BJ (cell line): ENCODE measurements at regions of chr20 and their contacts with region 1.

Region 1: GRCh38 chr20:38472513-38473372 is at the start of gene RALGAPB:
- DNase-seq: peak; percentile 89
- H3K4me3 ChIP-seq: peak within 1 kb of the TSS; percentile 71
- H3K27me3 ChIP-seq: no peaks in the 10 kb centered on the region
- CTCF ChIP-seq: peak; percentile 65
- polyA plus RNA-seq, gene RALGAPB: 14.8 and 24.3 TPM in 2 replicates

Region 2: DNA sequence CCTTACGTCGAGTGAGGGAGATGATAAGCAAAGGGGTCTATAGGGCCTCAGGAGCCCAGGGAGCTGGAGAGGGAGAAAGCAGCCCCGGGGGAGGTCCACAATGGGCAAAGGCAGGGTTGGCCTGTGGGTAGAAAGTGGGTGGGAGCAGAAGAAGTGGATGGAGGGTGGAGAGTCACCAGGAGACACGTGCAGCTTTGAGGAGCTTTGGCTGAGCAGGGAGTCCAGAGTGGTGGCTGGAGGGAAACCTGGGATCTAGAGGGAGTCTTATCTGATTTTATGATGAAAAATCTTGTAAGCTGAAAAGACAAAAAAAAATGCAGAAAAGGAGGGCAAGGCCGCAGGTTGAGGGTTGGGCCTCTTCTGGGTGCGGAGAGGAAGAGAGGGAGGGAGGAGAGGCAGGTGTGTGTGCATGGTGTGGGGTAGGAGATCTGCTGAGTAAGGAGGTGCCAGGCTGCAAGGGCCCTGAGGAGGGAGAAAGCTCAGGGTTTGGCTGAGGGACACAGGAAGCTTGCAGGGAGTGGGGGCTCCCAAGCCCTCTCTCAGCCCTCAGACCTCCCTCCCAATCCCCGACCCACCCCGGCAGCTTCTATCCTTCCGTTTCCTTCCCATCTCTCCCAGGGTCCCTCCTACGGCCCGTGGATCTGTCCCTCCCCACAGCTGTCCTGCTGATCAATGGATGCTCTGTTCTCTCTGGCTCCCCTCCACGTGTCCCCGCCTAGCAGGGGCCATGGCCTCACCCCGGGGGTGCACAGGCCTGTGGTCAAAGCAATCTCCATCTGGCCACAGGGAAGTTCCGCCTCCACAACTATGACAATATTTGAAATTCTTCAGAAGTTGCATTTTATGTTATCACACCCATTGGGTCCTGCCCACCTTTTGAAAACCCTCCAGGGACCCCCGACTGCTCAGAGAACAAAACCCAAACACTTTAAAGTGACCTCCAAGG is 185.9 kb before region 1 on chr20:
- CTCF ChIA-PET with region 1: no interaction called
- POLR2A ChIA-PET with region 1: no interaction called
- DNase-seq: no peak
- H3K4me3 ChIP-seq: no peak overlapping the region
- H3K27me3 ChIP-seq: no peaks in the 10 kb centered on the region
- CTCF ChIP-seq: no peak

Region 3: GRCh38 chr20:38434743-38435554 is 37.8 kb before region 1 on chr20 and contains the start of gene SNHG17:
- CTCF ChIA-PET with region 1: interaction called, 12 read pairs
- POLR2A ChIA-PET with region 1: interaction called, 4 read pairs
- DNase-seq: peak; percentile 39
- H3K4me3 ChIP-seq: peak within 1 kb of the TSS; percentile 86
- H3K27me3 ChIP-seq: no peaks in the 10 kb centered on the region
- CTCF ChIP-seq: peak; percentile 100
- polyA plus RNA-seq, gene SNHG17: 27.9 and 41.4 TPM in 2 replicates

Region 4: DNA sequence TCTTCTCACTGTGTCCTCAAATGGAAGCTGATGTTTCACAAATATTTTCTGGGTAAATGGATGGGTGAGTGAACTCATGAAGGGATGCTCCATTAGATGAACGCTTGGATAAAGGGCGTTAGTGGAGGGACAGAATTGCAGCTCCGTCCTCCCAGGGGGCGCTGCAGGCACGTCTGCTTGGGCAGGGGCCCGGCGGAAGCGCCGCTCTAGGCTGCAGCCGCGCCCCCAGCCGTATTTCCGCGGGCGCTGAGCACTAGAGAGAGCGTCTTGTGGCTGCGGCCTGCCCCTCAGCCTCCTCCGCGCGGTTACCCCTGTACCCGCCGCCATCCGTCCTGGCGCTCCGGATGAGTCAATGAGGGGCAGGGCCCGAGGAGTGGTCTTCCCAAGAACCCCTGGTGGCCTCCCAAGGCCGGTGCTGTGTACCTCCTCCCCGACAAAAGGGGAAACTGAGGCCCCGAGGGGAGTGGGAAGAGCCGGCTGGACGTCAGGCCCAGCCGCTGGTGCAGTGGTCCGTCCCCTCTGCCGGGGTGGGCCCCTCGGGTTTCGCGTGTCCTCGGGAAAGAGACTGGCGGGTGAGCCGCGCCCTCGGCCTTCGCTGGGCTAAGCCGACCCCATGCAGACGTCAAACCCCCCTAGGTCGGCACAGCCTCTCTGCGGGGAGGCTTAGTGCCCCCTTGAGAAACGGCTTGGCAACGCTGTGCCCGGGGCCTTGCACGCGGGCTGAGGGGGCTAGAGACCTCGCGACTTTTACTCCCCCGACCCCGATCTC is 26.1 kb before region 1 on chr20:
- CTCF ChIA-PET with region 1: interaction called, 12 read pairs
- POLR2A ChIA-PET with region 1: no interaction called
- DNase-seq: peak; percentile 32
- H3K4me3 ChIP-seq: peak overlapping the region; percentile 79
- H3K27me3 ChIP-seq: peaks cover 1% of the 10 kb centered on the region; the same call in 1 of the 2 replicates
- CTCF ChIP-seq: peak; percentile 95